A549 (cell line): ENCODE measurements at regions of chr11 and their contacts with region 1.

Region 1: DNA sequence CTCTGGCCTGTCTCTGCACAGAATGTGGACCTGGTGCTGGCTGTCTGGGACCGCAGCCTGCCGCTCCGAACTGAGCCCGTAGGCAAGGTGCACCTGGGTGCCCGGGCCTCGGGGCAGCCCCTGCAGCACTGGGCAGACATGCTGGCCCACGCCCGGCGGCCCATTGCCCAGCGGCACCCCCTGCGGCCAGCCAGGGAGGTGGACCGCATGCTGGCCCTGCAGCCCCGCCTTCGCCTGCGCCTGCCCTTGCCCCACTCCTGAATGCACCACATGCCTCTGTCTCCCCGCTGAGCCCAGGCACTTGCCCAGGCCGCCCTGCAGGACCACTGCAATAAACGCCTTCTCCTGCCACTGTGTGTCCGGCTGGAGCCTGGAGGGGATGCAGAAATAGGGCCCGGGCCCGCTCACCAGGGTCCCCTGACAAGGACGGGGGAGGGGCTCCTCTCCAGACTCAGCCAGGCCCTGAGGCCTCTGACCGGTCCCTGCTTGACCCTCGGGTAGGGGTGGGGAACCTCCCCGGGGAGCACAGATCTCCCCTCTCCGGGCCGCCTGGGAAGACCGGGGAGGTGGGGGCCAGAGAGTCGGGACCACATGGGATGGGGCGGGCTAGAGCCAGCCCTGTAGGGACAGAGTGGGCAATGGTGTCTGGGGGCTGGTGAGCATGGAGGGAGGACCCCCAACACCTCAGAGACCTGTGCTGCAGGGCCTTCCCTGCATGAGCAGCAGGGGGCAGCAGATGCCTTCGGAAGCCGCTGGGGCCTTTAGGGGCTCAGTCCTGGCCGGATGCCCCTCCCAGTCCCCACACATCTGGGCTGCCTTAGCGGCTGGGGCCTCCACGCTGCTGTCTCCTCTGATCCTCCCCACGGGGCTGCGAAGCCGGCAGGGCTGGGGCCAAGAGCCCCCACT is 1.4 kb upstream of the TNNI2 start:
- DNase-seq: peak; percentile 59 to 70
- ATAC-seq: peak; percentile 46 to 87
- H3K4me3 ChIP-seq: no peak overlapping the region
- H3K27ac ChIP-seq: peak overlapping the region in 1 of 2 experiments; percentile 73; a peak in 3 of 6 replicates
- H3K4me1 ChIP-seq: peaks cover 24% of the 10 kb centered on the region
- CTCF ChIP-seq: peak; percentile 89
- EP300 ChIP-seq: no peak
- POLR2A ChIP-seq: no peak
- RAD21 ChIP-seq: peak; percentile 93 to 97

Region 2: GRCh38 chr11:1181867-1182535 is 655.4 kb before region 1 on chr11:
- CTCF ChIA-PET with region 1: no interaction called
- POLR2A ChIA-PET with region 1: no interaction called
- DNase-seq: no peak
- ATAC-seq: peak in 1 of 2 experiments; percentile 10; a peak in 2 of 6 replicates
- H3K4me3 ChIP-seq: no peak overlapping the region
- H3K27ac ChIP-seq: no peak overlapping the region
- H3K4me1 ChIP-seq: no peaks in the 10 kb centered on the region
- CTCF ChIP-seq: no peak
- EP300 ChIP-seq: no peak
- POLR2A ChIP-seq: no peak
- RAD21 ChIP-seq: no peak

Region 3: DNA sequence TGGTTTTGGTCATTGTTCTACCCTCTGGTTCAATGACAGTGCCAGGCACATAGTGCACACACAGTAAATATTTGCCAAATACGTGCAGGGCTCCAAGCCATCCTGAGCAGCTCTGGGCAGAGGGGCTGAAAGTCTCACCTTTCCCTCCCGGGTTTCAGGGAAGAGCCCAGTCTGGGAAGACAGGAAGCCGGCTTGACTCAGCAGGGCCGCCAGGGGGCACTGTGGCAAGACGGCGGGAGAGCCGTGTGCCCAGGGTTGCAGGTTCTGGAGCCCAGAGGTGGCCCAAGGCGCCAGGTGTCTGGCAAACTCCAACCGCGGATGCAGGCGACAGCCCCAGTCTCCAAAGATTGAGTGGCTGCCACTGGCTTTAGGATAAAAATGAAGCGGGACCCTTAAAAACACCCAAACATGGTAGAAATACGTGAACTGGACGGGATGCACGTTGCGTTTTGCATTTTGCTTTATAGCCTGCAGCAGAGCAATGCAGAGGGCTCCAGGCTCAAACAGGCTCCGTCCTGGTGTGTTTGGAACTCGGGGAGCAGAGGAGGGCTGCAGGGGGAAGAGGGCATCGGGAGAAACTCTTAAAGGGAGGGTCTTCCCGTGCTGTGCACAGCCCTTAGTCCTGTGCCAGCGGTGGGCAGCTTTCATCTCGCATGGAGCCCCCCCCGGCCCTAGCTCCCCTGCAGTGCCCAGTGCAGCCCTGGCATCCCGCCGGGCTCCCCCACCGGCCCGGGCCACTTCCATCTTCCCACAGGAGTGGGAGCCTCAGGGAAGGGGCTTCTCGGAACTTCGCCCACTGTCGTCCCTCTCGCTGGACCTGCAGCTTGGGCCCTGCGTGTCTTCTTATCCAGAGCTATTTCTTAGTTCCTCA is 197.1 kb before region 1 on chr11:
- CTCF ChIA-PET with region 1: interaction called, 46 read pairs
- POLR2A ChIA-PET with region 1: no interaction called
- DNase-seq: peak; percentile 50 to 74
- ATAC-seq: peak; percentile 71 to 95
- H3K4me3 ChIP-seq: no peak overlapping the region
- H3K27ac ChIP-seq: no peak overlapping the region
- H3K4me1 ChIP-seq: no peaks in the 10 kb centered on the region
- CTCF ChIP-seq: peak; percentile 73
- EP300 ChIP-seq: no peak
- POLR2A ChIP-seq: no peak
- RAD21 ChIP-seq: peak; percentile 18; a peak in 1 of 5 replicates

Region 4: GRCh38 chr11:1852877-1853276 is 15.5 kb after region 1 on chr11 and contains the start of gene LSP1:
- CTCF ChIA-PET with region 1: interaction called, 174 read pairs
- POLR2A ChIA-PET with region 1: no interaction called
- DNase-seq: no peak
- ATAC-seq: no peak
- H3K4me3 ChIP-seq: no peak within 1 kb of the TSS
- H3K27ac ChIP-seq: no peak within 1 kb of the TSS
- H3K4me1 ChIP-seq: no peaks in the 10 kb centered on the region
- CTCF ChIP-seq: no peak
- EP300 ChIP-seq: no peak
- POLR2A ChIP-seq: no peak
- RAD21 ChIP-seq: no peak
- polyA plus RNA-seq, gene LSP1: 0.42 and 0.67 TPM in 2 replicates

Region 5: DNA sequence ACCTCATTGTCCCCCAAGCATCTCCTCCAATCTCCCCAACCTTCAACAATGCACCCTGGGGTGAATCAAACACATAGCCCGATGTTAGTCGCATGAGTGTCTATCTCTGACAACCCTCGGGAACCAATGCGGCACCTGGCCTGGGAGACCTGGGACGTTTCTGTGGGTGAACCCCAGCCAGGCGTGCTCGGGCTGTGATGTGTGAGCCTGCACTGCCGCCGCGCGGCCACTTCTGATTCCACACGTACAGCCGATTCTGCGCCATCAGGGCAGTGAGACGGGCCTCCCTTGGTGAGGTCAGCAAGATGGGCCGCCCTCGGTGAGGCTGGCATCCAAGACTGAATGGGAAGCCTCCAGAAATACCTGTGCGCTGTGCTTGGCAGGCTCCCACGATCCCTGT is 165.4 kb after region 1 on chr11:
- CTCF ChIA-PET with region 1: interaction called, 50 read pairs
- POLR2A ChIA-PET with region 1: no interaction called
- DNase-seq: no peak
- ATAC-seq: peak; percentile 49 to 72; a peak in 4 of 6 replicates
- H3K4me3 ChIP-seq: no peak overlapping the region
- H3K27ac ChIP-seq: no peak overlapping the region
- H3K4me1 ChIP-seq: no peaks in the 10 kb centered on the region
- CTCF ChIP-seq: no peak
- EP300 ChIP-seq: no peak
- POLR2A ChIP-seq: no peak
- RAD21 ChIP-seq: no peak